ENCODE measurements at regions of chr7 and their contacts with region 1.

Region 1: GRCh38 chr7:129825496-129826267 is 127.1 kb downstream of the UBE2H start:
- DNase-seq: peak; percentile 90 to 95
- H3K4me3 ChIP-seq: peak overlapping the region; percentile 82
- H3K4me3 Mint-ChIP-seq: peak overlapping the region; percentile 89
- H3K27ac Mint-ChIP-seq: peak overlapping the region; percentile 86
- H3K4me1 ChIP-seq: peaks cover 17% of the 10 kb centered on the region
- H3K4me1 Mint-ChIP-seq: peaks cover 4% of the 10 kb centered on the region
- H3K27me3 ChIP-seq: no peaks in the 10 kb centered on the region
- H3K27me3 Mint-ChIP-seq: no peaks in the 10 kb centered on the region
- CTCF ChIP-seq: peak; percentile 74 to 94

Region 2: GRCh38 chr7:129664029-129665012 is 161.4 kb before region 1 on chr7:
- CTCF ChIA-PET with region 1: interaction called, 3 read pairs
- POLR2A ChIA-PET with region 1: no interaction called
- intact Hi-C with region 1: loop called (anchors 1 kb)
- DNase-seq: peak in 1 of 2 experiments; percentile 42
- H3K4me3 ChIP-seq: no peak overlapping the region
- H3K4me3 Mint-ChIP-seq: no peak overlapping the region
- H3K27ac Mint-ChIP-seq: no peak overlapping the region
- H3K4me1 ChIP-seq: no peaks in the 10 kb centered on the region
- H3K4me1 Mint-ChIP-seq: no peaks in the 10 kb centered on the region
- H3K27me3 ChIP-seq: no peaks in the 10 kb centered on the region
- H3K27me3 Mint-ChIP-seq: no peaks in the 10 kb centered on the region
- CTCF ChIP-seq: peak; percentile 54 to 57

Region 3: DNA sequence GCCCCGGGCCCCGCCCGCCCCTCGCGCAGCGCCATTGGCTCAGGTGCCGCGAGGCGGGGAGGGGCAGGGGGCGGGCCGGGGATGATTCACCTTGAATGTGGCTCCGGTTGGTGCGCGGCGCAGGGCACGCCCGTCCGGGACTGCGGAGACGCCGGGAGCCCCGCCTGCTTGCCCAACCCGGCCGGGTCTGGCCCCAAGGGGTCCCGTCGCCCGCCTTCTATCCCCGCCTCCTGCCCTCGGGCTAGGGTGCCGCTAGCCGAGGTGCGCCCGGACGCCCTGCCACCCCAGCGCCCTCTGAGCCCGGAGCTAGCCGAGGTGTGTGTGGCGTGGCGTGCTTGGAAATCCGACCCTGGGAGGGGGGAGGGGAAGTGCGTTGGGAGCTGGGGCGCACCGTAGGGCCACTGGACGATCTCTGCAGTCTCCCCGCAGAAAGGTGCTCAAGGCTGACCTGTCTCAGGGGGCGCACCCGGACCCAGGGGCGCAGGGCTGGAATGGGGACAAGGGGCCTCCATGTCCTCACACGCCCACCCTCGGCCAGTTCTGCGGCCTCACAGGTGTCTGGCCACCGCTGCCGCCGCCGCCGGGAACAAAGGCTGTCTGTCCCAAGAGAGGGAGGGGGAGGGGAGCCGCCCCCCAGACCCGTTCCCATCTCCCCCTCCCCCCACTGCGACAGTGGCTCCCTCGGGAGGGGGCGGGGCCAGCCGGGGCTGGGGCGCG is 45.3 kb before region 1 on chr7:
- CTCF ChIA-PET with region 1: interaction called, 16 read pairs
- POLR2A ChIA-PET with region 1: interaction called, 13 read pairs
- intact Hi-C with region 1: loop called (anchors 1 kb)
- DNase-seq: peak; percentile 96 to 97
- H3K4me3 ChIP-seq: peak overlapping the region; percentile 84
- H3K4me3 Mint-ChIP-seq: peak overlapping the region; percentile 81
- H3K27ac Mint-ChIP-seq: no peak overlapping the region
- H3K4me1 ChIP-seq: peaks cover 12% of the 10 kb centered on the region
- H3K4me1 Mint-ChIP-seq: peaks cover 6% of the 10 kb centered on the region
- H3K27me3 ChIP-seq: no peaks in the 10 kb centered on the region
- H3K27me3 Mint-ChIP-seq: no peaks in the 10 kb centered on the region
- CTCF ChIP-seq: no peak

Region 4: DNA sequence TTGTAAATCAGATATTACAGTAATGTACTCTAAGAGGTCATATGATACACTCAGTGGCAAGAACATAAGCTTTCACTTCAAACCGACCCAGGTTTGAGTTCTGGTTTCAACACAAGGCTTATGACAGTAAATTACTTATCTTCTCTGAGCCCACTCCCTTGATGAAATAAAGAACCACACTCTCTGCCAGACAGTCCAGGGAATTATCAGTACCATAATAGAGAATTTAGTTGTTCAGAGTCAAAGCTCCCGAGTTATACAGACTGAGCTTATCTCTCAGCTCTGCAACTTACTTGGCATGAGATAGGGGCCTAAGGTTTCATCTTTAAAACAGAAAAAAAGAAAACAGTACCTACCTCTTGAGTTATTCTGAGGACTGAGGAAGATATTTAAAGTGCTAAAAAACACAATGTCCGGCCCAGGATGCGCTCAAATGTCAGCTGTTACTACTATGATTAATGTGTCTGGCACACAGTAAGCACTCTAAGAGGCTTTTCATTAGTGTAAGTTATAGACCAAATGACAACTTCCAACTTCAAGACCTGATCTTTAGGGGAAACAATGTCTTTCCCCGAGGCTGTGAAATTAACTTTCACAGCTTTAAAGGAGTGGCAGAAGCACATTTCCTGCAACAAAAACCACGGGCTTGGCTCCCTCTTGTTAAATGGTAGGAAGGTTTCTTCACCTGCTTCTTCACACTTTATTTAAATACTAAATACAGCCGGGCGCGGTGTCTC is 89.0 kb after region 1 on chr7:
- CTCF ChIA-PET with region 1: no interaction called
- POLR2A ChIA-PET with region 1: no interaction called
- intact Hi-C with region 1: no loop called
- DNase-seq: no peak
- H3K4me3 ChIP-seq: no peak overlapping the region
- H3K4me3 Mint-ChIP-seq: no peak overlapping the region
- H3K27ac Mint-ChIP-seq: no peak overlapping the region
- H3K4me1 ChIP-seq: no peaks in the 10 kb centered on the region
- H3K4me1 Mint-ChIP-seq: peaks cover 3% of the 10 kb centered on the region
- H3K27me3 ChIP-seq: no peaks in the 10 kb centered on the region
- H3K27me3 Mint-ChIP-seq: no peaks in the 10 kb centered on the region
- CTCF ChIP-seq: no peak